Heart right ventricle (tissue), 16 donors: ENCODE measurements at regions of chr9 and their contacts with region 1.

Region 1: DNA sequence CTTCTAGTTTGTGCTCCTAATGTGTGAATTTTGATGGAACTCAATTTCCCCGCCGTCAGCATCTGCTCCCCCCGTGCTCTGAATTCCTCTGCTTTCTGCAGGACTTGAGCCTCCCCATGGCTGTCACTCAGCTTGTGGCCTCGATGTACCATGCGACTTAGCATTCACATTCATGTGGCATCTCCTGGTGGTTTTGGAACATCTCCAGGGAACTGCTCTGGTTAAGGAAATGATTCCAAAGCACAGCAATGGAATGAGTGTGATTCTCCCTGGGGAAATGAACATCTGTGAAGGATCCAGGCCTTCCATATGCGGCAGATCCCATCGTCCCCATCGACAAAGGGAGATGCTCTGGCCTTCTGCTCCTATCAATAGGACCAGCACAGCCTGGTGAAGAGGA is 119.0 kb downstream of the ENTREP1 start:
- DNase-seq: no peak
- ATAC-seq: peak in 2 of 8 donors; percentile 40 to 47
- H3K4me3 ChIP-seq: no peak overlapping the region
- H3K27ac ChIP-seq: no peak overlapping the region
- H3K4me1 ChIP-seq: peaks cover 0 to 8% (median 0%) of the 10 kb centered on the region in 9 donors
- H3K27me3 ChIP-seq: no peaks in the 10 kb centered on the region
- CTCF ChIP-seq: no peak

Region 2: DNA sequence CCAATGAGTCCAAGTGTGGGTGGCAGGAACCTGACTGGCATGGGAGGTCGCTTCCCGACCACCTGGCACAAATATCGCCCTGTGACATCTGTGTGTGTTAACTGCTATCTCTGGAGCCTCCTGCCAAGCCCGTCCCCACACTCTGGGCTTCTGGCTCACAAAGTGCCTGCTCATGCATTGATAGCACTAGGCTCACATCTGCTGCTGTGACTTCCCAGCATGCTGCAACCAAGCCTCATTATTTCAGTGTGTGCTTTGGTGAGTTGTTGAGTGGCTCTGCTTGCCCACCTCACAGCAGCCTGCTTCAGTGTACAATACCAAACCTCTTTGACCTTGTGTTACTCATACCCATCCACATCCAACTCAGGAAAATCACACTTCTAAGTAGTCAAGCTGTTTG is 88.4 kb after region 1 on chr9:
- intact Hi-C with region 1: loop called in 2 of 10 experiments (anchors 5 to 10 kb)
- DNase-seq: no peak
- ATAC-seq: no peak
- H3K4me3 ChIP-seq: no peak overlapping the region
- H3K27ac ChIP-seq: no peak overlapping the region
- H3K4me1 ChIP-seq: peaks cover 0 to under 1% (median 0%) of the 10 kb centered on the region in 9 donors
- H3K27me3 ChIP-seq: no peaks in the 10 kb centered on the region
- CTCF ChIP-seq: no peak

Region 3: GRCh38 chr9:69649566-69650250 is 205.7 kb after region 1 on chr9:
- intact Hi-C with region 1: loop called in 1 of 10 experiments (anchors 5 kb)
- DNase-seq: no peak
- ATAC-seq: no peak
- H3K4me3 ChIP-seq: no peak overlapping the region
- H3K27ac ChIP-seq: no peak overlapping the region
- H3K4me1 ChIP-seq: no peaks in the 10 kb centered on the region
- H3K27me3 ChIP-seq: no peaks in the 10 kb centered on the region
- CTCF ChIP-seq: no peak

Region 4: GRCh38 chr9:70060883-70061507 is 617.0 kb after region 1 on chr9:
- intact Hi-C with region 1: no loop called
- DNase-seq: no peak
- ATAC-seq: no peak
- H3K4me3 ChIP-seq: no peak overlapping the region
- H3K27ac ChIP-seq: no peak overlapping the region
- H3K4me1 ChIP-seq: peaks cover 0 to 39% (median 0%) of the 10 kb centered on the region in 9 donors
- H3K27me3 ChIP-seq: no peaks in the 10 kb centered on the region
- CTCF ChIP-seq: no peak